ENCODE measurements at regions of chr1 and their contacts with region 1.

Region 1: DNA sequence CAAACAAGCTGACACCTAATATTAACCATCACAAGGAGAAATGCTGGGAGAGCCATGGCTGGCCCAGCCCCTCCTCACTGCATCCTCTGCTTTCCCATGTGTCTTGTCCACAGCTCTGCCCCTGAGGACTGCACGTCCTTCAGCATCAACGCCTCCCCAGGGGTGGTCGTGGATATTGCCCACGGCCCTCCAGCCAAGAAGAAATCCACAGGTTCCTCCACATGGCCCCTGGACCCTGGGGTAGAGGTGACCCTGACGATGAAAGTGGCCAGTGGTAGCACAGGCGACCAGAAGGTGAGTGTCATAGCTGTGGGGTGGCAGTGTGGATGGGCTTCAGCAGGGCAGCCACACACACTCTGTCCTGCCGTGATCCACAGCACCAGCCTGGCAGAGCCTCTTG is 22.9 kb downstream of the PADI4 start:
- DNase-seq: no peak
- H3K4me3 ChIP-seq: no peak overlapping the region
- H3K27ac ChIP-seq: no peak overlapping the region
- H3K4me1 ChIP-seq: no peaks in the 10 kb centered on the region
- H3K27me3 ChIP-seq: no peaks in the 10 kb centered on the region
- CTCF ChIP-seq: no peak

Region 2: GRCh38 chr1:16986113-16986512 is 344.7 kb before region 1 on chr1:
- CTCF ChIA-PET with region 1: interaction called, 11 read pairs
- POLR2A ChIA-PET with region 1: no interaction called
- intact Hi-C with region 1: no loop called
- DNase-seq: no peak
- H3K4me3 ChIP-seq: no peak overlapping the region
- H3K27ac ChIP-seq: no peak overlapping the region
- H3K4me1 ChIP-seq: no peaks in the 10 kb centered on the region
- H3K27me3 ChIP-seq: no peaks in the 10 kb centered on the region
- CTCF ChIP-seq: no peak

Region 3: DNA sequence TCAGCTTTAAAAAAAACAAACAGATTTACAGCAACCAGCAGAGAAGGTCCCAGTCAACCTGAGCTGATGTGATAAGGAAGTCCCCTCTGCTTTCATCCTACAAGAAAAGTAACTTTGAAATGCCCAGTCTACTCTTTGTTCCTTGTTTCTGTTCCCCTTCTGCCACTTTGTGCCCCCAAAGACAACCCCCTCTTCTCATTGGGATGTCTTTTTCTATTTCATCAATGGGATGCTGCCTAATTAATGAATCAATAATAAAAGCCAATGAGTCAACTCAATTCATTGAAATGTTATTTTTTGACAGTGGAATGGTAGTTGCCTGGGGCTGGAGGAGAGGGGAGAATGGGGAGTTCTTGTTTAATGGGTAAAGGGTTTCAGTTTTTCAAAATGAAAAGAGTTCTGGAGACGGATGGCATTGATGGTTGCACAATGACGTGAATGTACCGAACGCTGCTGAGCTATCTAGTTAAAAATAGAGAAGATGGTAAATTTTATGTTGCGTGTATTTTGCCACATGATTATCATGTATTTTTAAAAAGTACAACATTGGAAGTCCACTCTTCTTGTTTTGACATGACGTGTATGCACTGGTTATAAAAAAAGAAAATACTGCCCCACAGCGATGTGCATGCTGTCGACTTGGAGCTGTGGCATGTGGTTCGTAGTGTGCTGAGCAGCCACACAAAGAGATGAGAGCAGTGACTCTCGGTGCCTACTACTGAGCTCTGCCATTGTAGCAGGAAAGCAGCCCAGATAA is 189.2 kb before region 1 on chr1:
- CTCF ChIA-PET with region 1: no interaction called
- POLR2A ChIA-PET with region 1: no interaction called
- intact Hi-C with region 1: no loop called
- DNase-seq: no peak
- H3K4me3 ChIP-seq: no peak overlapping the region
- H3K27ac ChIP-seq: no peak overlapping the region
- H3K4me1 ChIP-seq: no peaks in the 10 kb centered on the region
- H3K27me3 ChIP-seq: no peaks in the 10 kb centered on the region
- CTCF ChIP-seq: no peak